K562 (cell line): ENCODE measurements at regions of chr11 and their contacts with region 1.

Region 1: GRCh38 chr11:76419896-76420295 is 24.9 kb upstream of the EMSY start:
- DNase-seq: peak; percentile 43 to 59 (median 46)
- ATAC-seq: peak; percentile 86
- H3K4me3 ChIP-seq: no peak overlapping the region
- H3K27ac ChIP-seq: no peak overlapping the region
- H3K4me1 ChIP-seq: no peaks in the 10 kb centered on the region
- H3K27me3 ChIP-seq: peaks cover 15 to 26% of the 10 kb centered on the region in 2 experiments; a peak in 4 of 5 replicates
- CTCF ChIP-seq: peak; percentile 55 to 69 (median 66)
- EP300 ChIP-seq: no peak
- POLR2A ChIP-seq: no peak
- RAD21 ChIP-seq: peak in 1 of 2 experiments; percentile 47; a peak in 3 of 4 replicates

Region 2: GRCh38 chr11:76347466-76347865 is 72.4 kb before region 1 on chr11:
- CTCF ChIA-PET with region 1: no interaction called
- POLR2A ChIA-PET with region 1: no interaction called
- in situ Hi-C with region 1: no loop called
- intact Hi-C with region 1: loop called (anchors 10 kb)
- DNase-seq: no peak
- ATAC-seq: no peak
- H3K4me3 ChIP-seq: no peak overlapping the region
- H3K27ac ChIP-seq: no peak overlapping the region
- H3K4me1 ChIP-seq: no peaks in the 10 kb centered on the region
- H3K27me3 ChIP-seq: no peaks in the 10 kb centered on the region
- CTCF ChIP-seq: no peak
- EP300 ChIP-seq: no peak
- POLR2A ChIP-seq: no peak
- RAD21 ChIP-seq: no peak

Region 3: DNA sequence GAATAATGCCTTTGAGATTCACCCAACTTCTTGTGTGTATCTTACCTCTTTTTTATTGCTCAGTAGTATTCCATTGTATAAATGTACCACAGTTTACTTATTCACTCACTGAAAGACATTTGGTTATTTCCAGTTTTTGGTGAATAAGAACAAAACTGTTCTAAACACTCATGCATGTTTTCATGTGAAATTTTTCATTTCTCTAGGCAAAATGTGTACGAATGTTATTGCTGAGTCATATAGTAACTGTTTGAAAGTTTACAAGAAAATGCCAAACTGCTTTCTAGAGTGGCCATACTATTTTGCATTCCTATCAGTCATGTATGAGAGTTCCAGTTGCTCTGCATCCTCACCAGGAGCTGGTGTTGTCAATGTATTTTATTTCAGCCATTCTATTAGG is 16.1 kb after region 1 on chr11:
- CTCF ChIA-PET with region 1: no interaction called
- POLR2A ChIA-PET with region 1: no interaction called
- in situ Hi-C with region 1: no loop called
- intact Hi-C with region 1: no loop called
- DNase-seq: no peak
- ATAC-seq: no peak
- H3K4me3 ChIP-seq: no peak overlapping the region
- H3K27ac ChIP-seq: no peak overlapping the region
- H3K4me1 ChIP-seq: peaks cover 2 to 7% of the 10 kb centered on the region in 2 experiments; a peak in 4 of 5 replicates
- H3K27me3 ChIP-seq: peaks cover 2 to 6% of the 10 kb centered on the region in 2 experiments; a peak in 2 of 5 replicates
- CTCF ChIP-seq: no peak
- EP300 ChIP-seq: no peak
- POLR2A ChIP-seq: no peak
- RAD21 ChIP-seq: no peak

Region 4: DNA sequence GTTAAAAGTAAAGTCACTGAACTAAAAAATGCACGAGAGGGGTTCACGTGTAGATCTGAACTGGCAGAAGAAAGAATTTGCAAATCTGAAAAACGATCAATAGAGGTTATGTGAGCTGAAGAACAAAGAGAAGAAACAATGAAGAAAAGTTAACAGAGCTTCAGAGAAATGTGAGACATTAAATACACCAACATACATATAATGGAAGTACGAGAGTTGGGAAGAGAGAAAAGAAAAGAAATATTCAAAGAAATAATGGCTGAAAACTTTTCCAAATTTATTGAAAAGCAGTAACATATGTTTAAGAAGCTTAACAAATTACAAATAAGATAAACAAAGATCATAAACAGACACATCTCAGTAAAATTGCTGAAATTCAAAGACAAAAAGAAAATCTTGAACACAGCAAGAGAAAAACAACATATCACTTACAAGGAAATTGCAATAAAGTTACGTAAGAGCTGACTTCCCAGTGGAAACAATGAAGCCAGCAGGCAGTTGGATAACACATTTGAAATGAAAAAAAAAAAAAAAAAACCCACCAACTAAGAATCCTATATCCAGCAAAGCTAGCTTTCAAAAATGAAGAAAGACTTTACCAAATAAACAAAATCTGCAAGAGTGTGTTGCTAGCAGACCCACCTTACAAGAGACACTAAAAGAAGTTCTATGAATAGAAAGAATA is 81.8 kb after region 1 on chr11:
- CTCF ChIA-PET with region 1: no interaction called
- POLR2A ChIA-PET with region 1: no interaction called
- in situ Hi-C with region 1: no loop called
- intact Hi-C with region 1: no loop called
- DNase-seq: no peak
- ATAC-seq: no peak
- H3K4me3 ChIP-seq: no peak overlapping the region
- H3K27ac ChIP-seq: no peak overlapping the region
- H3K4me1 ChIP-seq: no peaks in the 10 kb centered on the region
- H3K27me3 ChIP-seq: no peaks in the 10 kb centered on the region
- CTCF ChIP-seq: no peak
- EP300 ChIP-seq: no peak
- POLR2A ChIP-seq: no peak
- RAD21 ChIP-seq: no peak

Region 5: DNA sequence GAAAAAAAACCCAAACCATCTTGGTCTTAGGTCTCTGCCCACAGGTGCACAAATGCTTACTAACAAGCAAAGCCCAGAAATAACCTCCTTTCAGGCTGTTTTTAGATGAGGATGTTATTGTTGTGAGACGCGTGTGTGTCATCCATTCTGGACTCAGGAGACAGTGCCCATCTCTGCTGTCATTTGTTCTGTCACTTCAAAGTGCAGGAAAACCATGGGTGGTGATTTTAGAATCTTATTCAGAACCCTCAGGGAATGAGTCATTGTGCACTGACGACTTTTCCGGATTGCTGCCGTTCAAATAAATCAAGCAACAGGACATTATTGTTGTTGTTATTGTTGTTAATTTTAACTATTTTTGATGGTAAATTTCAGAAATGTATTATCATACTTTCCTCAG is 140.3 kb after region 1 on chr11:
- CTCF ChIA-PET with region 1: no interaction called
- POLR2A ChIA-PET with region 1: no interaction called
- in situ Hi-C with region 1: no loop called
- intact Hi-C with region 1: no loop called
- DNase-seq: no peak
- ATAC-seq: no peak
- H3K4me3 ChIP-seq: no peak overlapping the region
- H3K27ac ChIP-seq: no peak overlapping the region
- H3K4me1 ChIP-seq: no peaks in the 10 kb centered on the region
- H3K27me3 ChIP-seq: peaks cover 0 to 3% of the 10 kb centered on the region in 2 experiments; a peak in 1 of 5 replicates
- CTCF ChIP-seq: no peak
- EP300 ChIP-seq: no peak
- POLR2A ChIP-seq: no peak
- RAD21 ChIP-seq: no peak